Activated CD8-positive, alpha-beta T cell treated with anti-CD3 and anti-CD28 coated beads for 36 hours (primary cell): ENCODE measurements at regions of chr3 and their contacts with region 1.

Region 1: GRCh38 chr3:45978006-45978761 is 17.4 kb downstream of the FYCO1 start:
- DNase-seq: peak; percentile 90
- ATAC-seq: peak; percentile 17
- H3K4me3 Mint-ChIP-seq: peak overlapping the region; percentile 66
- H3K27ac Mint-ChIP-seq: peak overlapping the region; percentile 96
- H3K4me1 Mint-ChIP-seq: peaks cover 88% of the 10 kb centered on the region
- H3K27me3 Mint-ChIP-seq: no peaks in the 10 kb centered on the region
- CTCF ChIP-seq: no peak

Region 2: GRCh38 chr3:45915518-45916231 is 62.5 kb before region 1 on chr3:
- CTCF ChIA-PET with region 1: no interaction called
- POLR2A ChIA-PET with region 1: no interaction called
- intact Hi-C with region 1: no loop called
- DNase-seq: peak; percentile 91
- ATAC-seq: peak; percentile 93
- H3K4me3 Mint-ChIP-seq: peak overlapping the region; percentile 51
- H3K27ac Mint-ChIP-seq: peak overlapping the region; percentile 50
- H3K4me1 Mint-ChIP-seq: peaks cover 37% of the 10 kb centered on the region
- H3K27me3 Mint-ChIP-seq: peaks cover 11% of the 10 kb centered on the region
- CTCF ChIP-seq: no peak

Region 3: GRCh38 chr3:45964139-45964538 is 14.0 kb before region 1 on chr3:
- CTCF ChIA-PET with region 1: interaction called, 36 read pairs
- POLR2A ChIA-PET with region 1: interaction called, 38 read pairs
- intact Hi-C with region 1: no loop called
- DNase-seq: peak; percentile 84
- ATAC-seq: peak; percentile 88
- H3K4me3 Mint-ChIP-seq: no peak overlapping the region
- H3K27ac Mint-ChIP-seq: peak overlapping the region; percentile 82
- H3K4me1 Mint-ChIP-seq: peaks cover 65% of the 10 kb centered on the region
- H3K27me3 Mint-ChIP-seq: no peaks in the 10 kb centered on the region
- CTCF ChIP-seq: no peak

Region 4: DNA sequence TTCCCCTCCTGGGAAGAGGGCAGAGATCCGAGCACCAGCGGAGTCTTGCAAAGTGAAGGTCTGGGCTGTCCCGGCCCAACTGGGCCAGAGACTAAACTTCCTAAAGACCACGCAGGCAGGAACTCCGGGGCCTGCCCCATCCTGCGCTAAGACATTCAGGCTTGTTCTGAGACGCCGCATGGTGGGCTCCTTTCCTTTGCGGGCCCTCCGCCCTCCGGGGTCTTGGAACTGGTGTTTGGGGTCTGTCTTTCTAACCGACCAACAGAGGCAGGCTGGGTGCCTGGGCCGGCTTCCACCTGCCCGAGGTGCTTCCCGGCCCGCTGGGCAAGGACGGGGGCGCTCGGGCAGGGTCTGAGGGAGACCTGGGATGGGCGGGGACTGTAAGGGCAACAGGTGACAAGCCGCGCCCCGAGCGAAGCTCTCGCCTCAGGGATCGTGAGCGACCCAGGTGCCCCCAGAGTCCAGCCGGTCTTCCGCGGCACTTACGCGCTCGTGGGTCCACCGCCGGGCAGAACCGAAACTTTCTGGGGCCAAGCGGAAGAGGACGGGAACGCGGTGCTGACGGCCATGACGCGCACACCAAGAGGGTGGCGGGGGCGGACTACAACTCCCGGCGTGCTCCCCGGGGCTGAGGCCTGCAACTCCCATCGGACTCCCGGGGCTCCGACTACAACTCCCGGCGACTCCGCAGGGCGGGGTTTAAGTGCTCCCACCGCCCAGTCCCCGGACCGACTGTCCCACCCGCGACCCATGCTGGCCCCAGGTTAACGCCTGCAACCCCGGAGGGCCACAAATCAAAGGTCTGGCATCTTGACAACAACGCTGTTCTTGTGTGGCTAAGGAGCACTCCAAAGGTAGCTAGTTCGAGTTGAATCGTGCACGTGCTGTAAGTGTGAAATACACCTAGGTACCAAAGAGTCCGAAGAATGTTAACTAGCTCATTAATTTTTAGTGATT is 17.3 kb after region 1 on chr3 and contains the start of gene FYCO1:
- CTCF ChIA-PET with region 1: interaction called, 34 read pairs
- POLR2A ChIA-PET with region 1: interaction called, 61 read pairs
- intact Hi-C with region 1: loop called (anchors 2 kb)
- DNase-seq: peak; percentile 96
- ATAC-seq: peak; percentile 82
- H3K4me3 Mint-ChIP-seq: peak within 1 kb of the TSS; percentile 83
- H3K27ac Mint-ChIP-seq: peak within 1 kb of the TSS; percentile 91
- H3K4me1 Mint-ChIP-seq: peaks cover 46% of the 10 kb centered on the region
- H3K27me3 Mint-ChIP-seq: peaks cover 4% of the 10 kb centered on the region
- CTCF ChIP-seq: no peak
- total RNA-seq, gene FYCO1: 14.1 to 14.5 TPM

Region 5: DNA sequence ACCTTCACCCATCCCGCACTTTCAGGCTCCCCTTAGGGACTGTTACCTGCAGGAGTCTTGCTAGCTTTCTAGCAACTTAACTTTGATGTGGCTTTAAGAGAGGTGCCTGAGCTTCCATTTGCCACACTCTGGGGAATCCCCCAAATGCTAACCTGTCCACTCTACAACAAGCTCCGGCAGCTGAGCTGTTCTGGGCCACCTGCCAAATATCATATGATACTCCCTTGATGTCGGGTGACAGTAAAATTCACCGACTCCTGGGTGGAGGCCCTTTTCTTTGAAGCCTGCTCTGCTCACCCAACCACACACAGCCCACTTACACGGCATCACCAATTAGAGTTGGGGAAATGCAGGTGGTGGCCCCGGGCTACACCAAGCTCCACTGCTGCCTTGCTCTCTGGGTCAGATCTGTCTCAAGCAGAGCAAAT is 87.1 kb after region 1 on chr3:
- CTCF ChIA-PET with region 1: interaction called, 5 read pairs
- POLR2A ChIA-PET with region 1: interaction called, 7 read pairs
- intact Hi-C with region 1: loop called (anchors 5 kb)
- DNase-seq: peak; percentile 95
- ATAC-seq: peak; percentile 94
- H3K4me3 Mint-ChIP-seq: peak overlapping the region; percentile 31
- H3K27ac Mint-ChIP-seq: peak overlapping the region; percentile 66
- H3K4me1 Mint-ChIP-seq: peaks cover 55% of the 10 kb centered on the region
- H3K27me3 Mint-ChIP-seq: peaks cover 27% of the 10 kb centered on the region
- CTCF ChIP-seq: no peak